Ovary (tissue), 10 donors: ENCODE measurements at regions of chr13 and their contacts with region 1.

Region 1: GRCh38 chr13:92187378-92187989 is 789.1 kb downstream of the GPC5 start:
- DNase-seq: peak in 1 of 5 donors; percentile 29
- H3K4me3 ChIP-seq: no peak overlapping the region
- H3K27ac ChIP-seq: no peak overlapping the region
- H3K4me1 ChIP-seq: no peaks in the 10 kb centered on the region
- H3K27me3 ChIP-seq: no peaks in the 10 kb centered on the region
- CTCF ChIP-seq: peak; percentile 77 to 79 (median 79)
- EP300 ChIP-seq: no peak
- POLR2A ChIP-seq: no peak

Region 2: DNA sequence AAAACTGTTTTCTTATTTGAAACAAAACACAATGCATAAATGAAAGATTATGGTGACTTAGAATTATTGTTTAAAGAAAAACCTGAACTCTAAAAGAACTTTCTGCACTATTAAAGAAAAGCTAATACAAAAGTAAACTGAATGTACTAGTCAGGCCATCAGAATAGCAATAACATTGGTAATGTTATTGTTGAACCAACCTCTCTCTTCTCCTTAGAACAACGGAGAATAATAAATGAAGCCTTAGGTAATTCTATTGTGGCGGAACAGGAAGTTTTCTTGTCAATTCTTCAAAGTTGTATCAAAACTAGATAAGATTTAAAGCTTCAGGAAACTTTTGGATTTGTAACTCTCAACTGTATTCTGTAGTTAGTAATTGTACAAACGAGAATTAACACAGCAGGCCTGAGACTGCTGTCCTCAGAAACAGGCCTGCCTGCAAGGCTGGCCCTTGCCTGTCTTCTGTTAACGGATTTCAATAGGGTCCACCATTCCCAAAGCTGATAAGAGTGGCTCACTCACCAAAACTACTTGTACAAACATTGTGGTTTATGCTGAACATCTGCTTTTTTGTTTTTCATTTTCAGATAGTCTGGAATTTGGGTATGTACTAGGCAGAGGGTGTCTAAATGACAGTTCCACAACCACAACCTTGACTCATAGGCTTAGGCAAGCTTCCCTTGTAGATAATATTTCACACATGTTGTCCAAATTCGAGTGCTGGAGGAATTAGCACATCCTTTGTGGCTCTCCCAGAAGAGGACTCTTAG is 36.8 kb after region 1 on chr13:
- intact Hi-C with region 1: loop called in 1 of 4 experiments (anchors 2 kb)
- DNase-seq: peak in 3 of 5 donors; percentile 20 to 27 (median 24)
- H3K4me3 ChIP-seq: no peak overlapping the region
- H3K27ac ChIP-seq: peak overlapping the region in 1 of 2 donors; percentile 54
- H3K4me1 ChIP-seq: peaks cover 5% of the 10 kb centered on the region
- H3K27me3 ChIP-seq: no peaks in the 10 kb centered on the region
- CTCF ChIP-seq: no peak
- EP300 ChIP-seq: no peak
- POLR2A ChIP-seq: no peak

Region 3: DNA sequence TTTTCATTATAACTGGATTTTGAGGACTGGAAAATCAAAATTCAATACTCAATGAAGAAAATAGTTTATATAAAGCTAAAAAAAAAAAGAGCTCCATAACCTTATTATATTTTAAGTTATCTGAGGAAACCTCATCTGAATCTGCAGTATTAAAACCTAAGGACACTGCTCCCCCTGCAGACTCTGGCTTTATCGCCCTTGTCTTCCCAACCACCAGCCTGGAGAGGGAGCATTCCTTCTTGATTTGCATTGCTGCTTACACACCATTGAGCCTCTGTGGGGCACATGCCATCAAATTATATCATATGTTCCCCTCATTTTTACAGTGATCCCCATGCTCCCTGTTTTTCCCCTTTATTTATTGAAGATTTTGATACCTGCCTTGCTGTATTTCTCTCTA is 167.7 kb after region 1 on chr13:
- intact Hi-C with region 1: loop called in 2 of 4 experiments (anchors 10 kb)
- DNase-seq: peak in 3 of 5 donors; percentile 14 to 33 (median 25)
- H3K4me3 ChIP-seq: no peak overlapping the region
- H3K27ac ChIP-seq: no peak overlapping the region
- H3K4me1 ChIP-seq: no peaks in the 10 kb centered on the region
- H3K27me3 ChIP-seq: no peaks in the 10 kb centered on the region
- CTCF ChIP-seq: peak in 1 of 3 donors; percentile 20
- EP300 ChIP-seq: no peak
- POLR2A ChIP-seq: no peak